ENCODE measurements at regions of chr12 and their contacts with region 1.

Region 1: DNA sequence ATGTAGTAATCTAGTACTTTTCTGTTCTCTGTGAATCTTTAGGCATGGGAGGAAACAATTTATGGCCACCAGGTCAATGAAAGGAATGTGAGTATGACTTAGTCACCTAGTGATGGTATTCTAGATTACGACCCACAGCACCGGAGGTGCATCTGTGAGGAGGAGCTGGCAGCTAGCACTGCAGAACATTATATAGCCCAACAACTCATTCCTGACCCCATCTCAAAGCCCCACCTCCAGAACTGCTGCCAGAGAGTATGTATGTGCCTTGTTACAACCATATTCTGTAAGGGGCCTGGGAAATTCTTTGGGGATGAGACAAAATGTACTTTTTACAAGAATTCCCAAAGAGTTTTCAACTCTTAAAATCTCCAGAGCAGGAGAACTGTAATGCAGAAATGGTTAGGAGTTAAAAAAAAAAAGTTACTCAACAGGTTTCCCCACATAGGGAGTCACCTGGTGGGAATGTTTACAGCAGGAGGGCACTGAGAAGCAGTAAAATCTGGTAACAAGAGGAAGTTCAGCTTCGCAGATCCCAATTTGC is 34.9 kb upstream of the CERS5 start:
- DNase-seq: peak; percentile 81
- ATAC-seq: peak; percentile 97
- H3K4me3 ChIP-seq: peak overlapping the region; percentile 19 to 56; a peak in 3 of 4 replicates
- H3K27ac ChIP-seq: peak overlapping the region; percentile 91
- H3K4me1 ChIP-seq: peaks cover 34 to 49% of the 10 kb centered on the region in 2 experiments
- H3K27me3 ChIP-seq: no peaks in the 10 kb centered on the region
- CTCF ChIP-seq: no peak
- POLR2A ChIP-seq: no peak
- RAD21 ChIP-seq: peak; percentile 23; the same call in 1 of the 2 replicates

Region 2: DNA sequence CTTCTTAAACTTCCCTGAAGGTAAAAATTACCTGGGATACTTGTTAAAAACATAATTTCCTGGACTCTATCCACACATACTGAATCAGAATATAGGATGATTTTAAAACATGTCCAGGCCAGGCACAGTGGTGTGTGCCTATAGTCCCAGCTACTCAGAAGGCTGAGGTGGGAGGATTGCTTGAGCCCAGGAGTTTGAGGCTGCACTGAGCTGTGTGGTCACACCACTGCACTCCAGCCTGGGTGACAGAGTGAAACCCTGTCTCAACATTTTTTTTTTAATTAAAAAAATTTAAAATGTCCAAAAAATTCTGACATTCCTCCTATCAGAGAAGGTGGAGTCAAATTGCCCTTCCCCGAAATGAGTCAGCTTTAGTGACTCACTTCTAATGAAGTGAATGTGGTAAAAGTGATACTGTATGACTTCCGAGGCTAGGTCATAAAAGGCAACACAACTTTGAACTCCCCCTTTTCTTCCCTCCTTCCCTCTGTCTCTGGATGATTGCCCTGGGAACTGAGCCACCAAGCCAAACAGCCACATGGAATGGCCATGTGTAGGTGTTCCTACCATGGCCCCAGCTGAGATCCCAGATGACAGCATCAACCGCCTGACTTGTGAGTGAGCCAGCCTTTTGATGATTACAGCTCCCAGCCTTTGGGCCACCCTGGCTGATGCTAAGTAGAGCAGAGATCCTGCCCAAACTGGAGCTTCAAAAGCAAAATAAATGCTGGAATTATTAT is 45.0 kb after region 1 on chr12:
- CTCF ChIA-PET with region 1: no interaction called
- POLR2A ChIA-PET with region 1: no interaction called
- RAD21 ChIA-PET with region 1: interaction called in 1 of 2 experiments, 4 read pairs
- intact Hi-C with region 1: loop called (anchors 2 kb)
- DNase-seq: peak; percentile 99
- ATAC-seq: peak; percentile 82
- H3K4me3 ChIP-seq: no peak overlapping the region
- H3K27ac ChIP-seq: peak overlapping the region; percentile 61
- H3K4me1 ChIP-seq: peaks cover 74 to 93% of the 10 kb centered on the region in 2 experiments
- H3K27me3 ChIP-seq: no peaks in the 10 kb centered on the region
- CTCF ChIP-seq: no peak
- POLR2A ChIP-seq: no peak
- RAD21 ChIP-seq: peak; percentile 45; the same call in 1 of the 2 replicates